ENCODE measurements at regions of chr15 and their contacts with region 1.

Region 1: GRCh38 chr15:65184868-65185738 is at the start of gene CLPX:
- DNase-seq: peak; percentile 88
- H3K4me3 Mint-ChIP-seq: peak within 1 kb of the TSS; percentile 97
- H3K27ac Mint-ChIP-seq: peak within 1 kb of the TSS; percentile 90
- H3K4me1 Mint-ChIP-seq: peaks cover 27% of the 10 kb centered on the region
- H3K27me3 Mint-ChIP-seq: no peaks in the 10 kb centered on the region
- total RNA-seq, gene CLPX: 53.5 and 59.2 TPM in 2 replicates

Region 2: DNA sequence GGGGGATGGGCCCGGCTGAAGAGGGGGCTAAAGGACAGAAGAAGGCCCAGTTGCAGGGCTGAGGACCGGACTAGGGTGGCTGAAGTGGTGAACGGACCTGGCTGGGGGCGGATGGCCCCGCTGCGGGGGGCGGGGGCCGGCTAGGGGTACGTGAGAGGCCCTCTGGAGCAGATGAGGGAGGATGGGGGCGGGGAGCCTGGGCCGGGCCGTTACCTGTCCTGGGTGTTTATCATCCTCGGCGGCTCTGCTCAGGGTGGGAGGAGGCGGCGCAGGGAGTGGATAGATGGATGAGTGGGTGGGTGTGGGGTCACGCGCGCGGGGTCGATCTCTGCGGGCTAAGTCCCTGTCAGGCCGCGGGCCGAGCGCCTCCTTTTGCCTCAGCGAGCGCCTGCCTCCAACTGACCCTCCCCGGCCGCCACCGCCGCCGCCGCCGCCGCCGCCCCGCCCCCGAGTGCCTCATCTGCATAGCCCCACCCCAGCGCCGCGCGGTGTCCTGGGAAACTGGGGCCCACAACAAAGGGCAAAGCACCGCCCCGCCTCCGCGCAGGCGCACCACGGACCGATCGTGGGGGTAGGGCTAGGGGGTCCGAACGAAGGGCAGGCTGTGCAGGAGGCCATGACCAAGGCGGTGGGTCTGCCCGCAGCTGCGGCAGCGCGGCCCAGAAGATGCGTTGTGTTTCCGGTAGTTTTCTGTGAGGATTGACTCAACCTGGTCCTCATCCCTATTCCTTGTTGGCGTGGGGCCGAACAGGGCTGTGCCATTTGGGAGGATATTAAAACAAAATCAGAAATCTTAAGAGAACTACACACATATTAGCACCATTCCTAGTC is 482.1 kb before region 1 on chr15:
- intact Hi-C with region 1: loop called (anchors 5 kb)
- DNase-seq: peak; percentile 92
- H3K4me3 Mint-ChIP-seq: peak overlapping the region; percentile 87
- H3K27ac Mint-ChIP-seq: peak overlapping the region; percentile 83
- H3K4me1 Mint-ChIP-seq: peaks cover 44% of the 10 kb centered on the region
- H3K27me3 Mint-ChIP-seq: no peaks in the 10 kb centered on the region

Region 3: GRCh38 chr15:65133548-65134200 is 51.4 kb before region 1 on chr15 and contains the start of gene PDCD7:
- intact Hi-C with region 1: loop called (anchors 2 kb)
- DNase-seq: peak; percentile 82
- H3K4me3 Mint-ChIP-seq: peak within 1 kb of the TSS; percentile 86
- H3K27ac Mint-ChIP-seq: peak within 1 kb of the TSS; percentile 87
- H3K4me1 Mint-ChIP-seq: peaks cover 15% of the 10 kb centered on the region
- H3K27me3 Mint-ChIP-seq: no peaks in the 10 kb centered on the region
- total RNA-seq, gene PDCD7: 51.9 and 68.4 TPM in 2 replicates

Region 4: DNA sequence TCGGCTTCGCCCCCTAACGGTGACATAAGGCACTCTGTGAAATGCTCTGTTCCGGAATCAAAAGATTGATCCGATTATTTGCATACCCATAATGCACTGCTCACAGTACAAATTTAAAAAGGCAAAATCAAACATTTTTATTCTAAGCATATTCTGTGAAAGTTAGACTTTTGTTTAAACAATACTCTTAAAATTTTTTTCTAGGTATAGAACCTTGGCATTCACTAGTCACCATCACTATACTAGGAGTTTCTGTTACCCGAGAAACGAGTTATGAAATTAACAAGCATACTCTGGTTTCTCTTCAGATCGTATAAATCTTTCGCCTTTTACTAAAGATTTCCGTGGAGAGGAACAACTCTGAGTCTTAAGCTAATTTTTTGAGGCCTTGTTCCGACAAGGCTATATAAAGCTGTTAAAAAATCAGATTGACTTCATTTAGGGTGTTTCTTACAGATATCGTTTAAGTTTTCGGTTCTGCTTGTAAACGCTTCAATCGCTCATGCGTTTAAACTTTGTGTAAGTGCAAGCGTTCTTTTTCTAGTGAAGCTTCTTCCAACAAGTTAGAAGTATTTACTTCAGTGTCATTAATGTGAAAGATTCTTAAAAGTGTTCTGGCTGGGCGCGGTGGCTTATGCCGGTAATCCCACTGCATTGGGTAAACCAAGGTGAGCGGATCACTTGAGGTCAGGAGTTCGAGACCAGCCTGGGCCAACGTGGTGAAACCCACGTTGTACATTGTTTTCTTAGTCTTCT is 119.5 kb after region 1 on chr15 and contains the start of gene RNU5B-1:
- intact Hi-C with region 1: loop called (anchors 1 kb)
- DNase-seq: peak; percentile 85
- H3K4me3 Mint-ChIP-seq: peak within 1 kb of the TSS; percentile 87
- H3K27ac Mint-ChIP-seq: peak within 1 kb of the TSS; percentile 96
- H3K4me1 Mint-ChIP-seq: peaks cover 22% of the 10 kb centered on the region
- H3K27me3 Mint-ChIP-seq: no peaks in the 10 kb centered on the region
- total RNA-seq, gene RNU5B-1: not detected in 2 replicates

Measured in activated T-helper 2 cell treated with anti-CD3 and anti-CD28 coated beads, Interferon-gamma antibody, Interleukin-2, Interleukin-4, amounts not matched to agents 10 μg/mL and 5 μg/mL and 100 μg/mL, durations not matched to agents 14 hours and 24 hours and 36 hours (primary cell).